ENCODE measurements at regions of chr17 and their contacts with region 1.

Region 1: DNA sequence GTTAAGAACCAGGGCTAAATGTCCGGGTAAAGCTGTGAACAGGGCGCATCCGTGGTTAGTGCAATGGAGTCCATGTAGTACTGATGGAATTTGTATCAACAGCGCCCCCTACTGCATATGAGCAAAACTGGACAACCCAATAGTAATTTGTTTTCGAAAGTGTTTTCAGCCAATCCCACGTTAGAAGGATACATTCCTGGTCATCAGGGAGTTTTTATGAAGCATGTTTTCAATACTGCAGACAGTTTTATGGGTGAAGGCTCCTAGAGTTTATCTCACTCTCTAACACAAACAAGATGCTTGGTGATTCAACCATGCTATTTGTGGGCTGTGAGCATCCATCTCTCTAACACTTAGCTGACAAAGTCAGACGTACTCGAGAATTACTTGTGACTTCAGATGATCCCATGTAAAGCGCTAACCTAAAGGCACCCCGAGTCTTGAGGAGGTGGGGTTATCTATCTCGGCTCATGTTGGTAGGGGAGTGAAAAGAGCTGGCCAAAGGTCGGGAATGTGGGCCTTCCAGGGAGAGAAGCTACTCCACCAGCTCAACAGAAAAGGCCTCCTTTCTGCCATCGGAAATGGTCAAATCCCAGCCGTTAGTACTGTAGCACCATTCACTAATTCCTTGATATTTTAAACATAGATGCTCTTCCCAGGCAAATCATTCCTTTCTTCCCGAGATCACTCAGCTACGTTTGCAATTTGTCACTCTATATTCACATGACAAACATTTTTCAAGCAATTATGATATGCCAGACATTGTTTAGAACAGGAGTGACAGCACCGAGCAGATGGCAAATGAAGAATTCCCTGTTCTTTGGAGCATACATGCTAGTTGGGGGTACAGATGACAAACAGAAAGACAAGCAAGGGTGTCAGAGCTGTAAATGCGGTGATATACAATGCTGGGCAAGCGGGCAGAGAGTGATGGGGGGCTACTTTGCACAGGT is 46.9 kb upstream of the HNF1B start:
- DNase-seq: peak; percentile 73
- ATAC-seq: peak; percentile 90
- H3K4me3 Mint-ChIP-seq: no peak overlapping the region
- H3K27ac Mint-ChIP-seq: no peak overlapping the region
- H3K4me1 Mint-ChIP-seq: no peaks in the 10 kb centered on the region
- H3K27me3 Mint-ChIP-seq: peaks cover 49% of the 10 kb centered on the region

Region 2: DNA sequence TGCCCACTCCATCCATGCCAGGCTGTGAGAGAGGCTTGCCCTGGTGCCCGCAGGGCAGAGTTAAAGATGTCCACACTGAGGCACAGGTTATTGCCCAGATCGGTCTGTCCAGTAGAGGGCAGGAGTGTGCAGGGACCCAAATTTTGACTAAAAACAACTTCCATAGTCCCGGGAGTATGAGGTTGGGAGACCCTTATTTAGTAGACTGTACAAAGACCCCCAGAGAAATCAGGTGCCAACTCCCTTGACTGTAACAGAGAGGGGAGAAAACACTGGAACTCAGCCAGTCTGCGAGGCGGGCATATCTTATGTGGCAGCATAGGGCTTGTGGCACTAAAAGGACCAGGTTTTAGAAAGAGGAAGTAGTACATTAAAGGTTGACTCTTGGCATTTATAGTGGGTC is 90.2 kb before region 1 on chr17:
- CTCF ChIA-PET with region 1: interaction called, 18 read pairs
- DNase-seq: peak; percentile 60
- ATAC-seq: peak; percentile 70
- H3K4me3 Mint-ChIP-seq: no peak overlapping the region
- H3K27ac Mint-ChIP-seq: no peak overlapping the region
- H3K4me1 Mint-ChIP-seq: peaks cover 17% of the 10 kb centered on the region
- H3K27me3 Mint-ChIP-seq: peaks cover 52% of the 10 kb centered on the region

Region 3: DNA sequence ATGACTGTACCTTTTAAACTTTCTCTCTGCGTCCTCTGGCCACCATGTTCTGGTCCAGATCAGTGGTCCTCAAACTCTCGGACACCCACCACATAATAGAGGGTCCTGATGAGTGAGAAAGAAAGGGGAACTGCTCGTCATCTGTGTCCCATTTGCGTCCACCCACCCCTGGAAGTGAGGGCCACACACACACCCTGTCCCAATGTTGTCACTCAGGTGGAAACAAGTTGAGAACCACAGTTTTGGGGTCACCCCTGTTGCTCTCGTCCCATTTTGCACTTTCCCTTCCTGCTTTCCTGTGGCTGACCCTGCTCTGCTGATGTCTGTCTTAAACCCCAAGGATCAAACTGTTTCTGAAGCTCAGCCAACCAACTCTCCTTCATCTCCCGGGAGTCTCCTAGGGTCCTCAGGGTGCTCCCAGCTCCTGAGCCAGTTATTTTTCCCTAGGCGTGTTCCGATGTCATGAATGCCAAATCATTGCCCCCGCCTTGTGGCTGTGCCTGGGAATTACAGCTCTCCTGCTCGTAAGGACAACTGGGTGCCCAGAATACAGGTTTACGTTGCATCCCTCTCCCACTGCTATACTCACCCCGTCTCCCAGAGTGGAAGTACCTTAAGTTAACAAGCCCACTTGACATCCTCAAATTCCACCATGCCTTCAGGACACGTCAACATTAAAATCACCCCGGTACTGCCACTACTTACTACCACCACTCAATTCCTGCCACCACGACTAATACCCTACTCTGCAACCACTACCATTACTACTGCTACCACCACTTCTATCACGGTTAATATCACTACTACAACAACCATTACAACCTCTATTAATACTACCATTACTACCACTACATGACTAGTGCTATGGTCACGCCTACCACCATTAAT is 20.8 kb before region 1 on chr17:
- CTCF ChIA-PET with region 1: interaction called, 14 read pairs
- DNase-seq: peak; percentile 48
- ATAC-seq: no peak
- H3K4me3 Mint-ChIP-seq: no peak overlapping the region
- H3K27ac Mint-ChIP-seq: no peak overlapping the region
- H3K4me1 Mint-ChIP-seq: peaks cover 41% of the 10 kb centered on the region
- H3K27me3 Mint-ChIP-seq: peaks cover 15% of the 10 kb centered on the region